ENCODE measurements at regions of chr1 and their contacts with region 1.

Region 1: GRCh38 chr1:169081503-169082123 is 24.9 kb upstream of the ATP1B1 start:
- DNase-seq: no peak
- ATAC-seq: no peak
- H3K4me3 ChIP-seq: no peak overlapping the region
- H3K27ac ChIP-seq: no peak overlapping the region
- H3K4me1 ChIP-seq: no peaks in the 10 kb centered on the region
- H3K27me3 ChIP-seq: no peaks in the 10 kb centered on the region
- CTCF ChIP-seq: no peak
- EP300 ChIP-seq: no peak
- POLR2A ChIP-seq: no peak
- RAD21 ChIP-seq: no peak

Region 2: GRCh38 chr1:169060906-169061639 is 20.5 kb before region 1 on chr1:
- CTCF ChIA-PET with region 1: interaction called, 8 read pairs
- POLR2A ChIA-PET with region 1: interaction called, 4 read pairs
- RAD21 ChIA-PET with region 1: no interaction called
- SMC1A ChIA-PET with region 1: interaction called, 14 read pairs
- in situ Hi-C with region 1: no loop called
- intact Hi-C with region 1: no loop called
- DNase-seq: no peak
- ATAC-seq: no peak
- H3K4me3 ChIP-seq: no peak overlapping the region
- H3K27ac ChIP-seq: no peak overlapping the region
- H3K4me1 ChIP-seq: no peaks in the 10 kb centered on the region
- H3K27me3 ChIP-seq: no peaks in the 10 kb centered on the region
- CTCF ChIP-seq: no peak
- EP300 ChIP-seq: no peak
- POLR2A ChIP-seq: no peak
- RAD21 ChIP-seq: no peak